Dorsolateral prefrontal cortex (tissue), 120 donors: ENCODE measurements at regions of chr4 and their contacts with region 1.

Region 1: GRCh38 chr4:27048429-27049238 is 188.0 kb downstream of the STIM2 start:
- DNase-seq: no peak
- H3K4me3 ChIP-seq: peak overlapping the region; percentile 1 to 74 (median 56)
- H3K27ac ChIP-seq: peak overlapping the region in 3 of 59 donors; percentile 1 to 36 (median 15)
- H3K27me3 ChIP-seq: peaks cover 0 to 12% (median 0%) of the 10 kb centered on the region in 45 donors
- CTCF ChIP-seq: peak; percentile 71 to 97 (median 86)

Region 2: GRCh38 chr4:26943391-26943790 is 105.2 kb before region 1 on chr4:
- intact Hi-C with region 1: no loop called
- DNase-seq: no peak
- H3K4me3 ChIP-seq: no peak overlapping the region
- H3K27ac ChIP-seq: peak overlapping the region in 13 of 59 donors; percentile 0 to 62 (median 18)
- H3K27me3 ChIP-seq: no peaks in the 10 kb centered on the region
- CTCF ChIP-seq: no peak

Region 3: DNA sequence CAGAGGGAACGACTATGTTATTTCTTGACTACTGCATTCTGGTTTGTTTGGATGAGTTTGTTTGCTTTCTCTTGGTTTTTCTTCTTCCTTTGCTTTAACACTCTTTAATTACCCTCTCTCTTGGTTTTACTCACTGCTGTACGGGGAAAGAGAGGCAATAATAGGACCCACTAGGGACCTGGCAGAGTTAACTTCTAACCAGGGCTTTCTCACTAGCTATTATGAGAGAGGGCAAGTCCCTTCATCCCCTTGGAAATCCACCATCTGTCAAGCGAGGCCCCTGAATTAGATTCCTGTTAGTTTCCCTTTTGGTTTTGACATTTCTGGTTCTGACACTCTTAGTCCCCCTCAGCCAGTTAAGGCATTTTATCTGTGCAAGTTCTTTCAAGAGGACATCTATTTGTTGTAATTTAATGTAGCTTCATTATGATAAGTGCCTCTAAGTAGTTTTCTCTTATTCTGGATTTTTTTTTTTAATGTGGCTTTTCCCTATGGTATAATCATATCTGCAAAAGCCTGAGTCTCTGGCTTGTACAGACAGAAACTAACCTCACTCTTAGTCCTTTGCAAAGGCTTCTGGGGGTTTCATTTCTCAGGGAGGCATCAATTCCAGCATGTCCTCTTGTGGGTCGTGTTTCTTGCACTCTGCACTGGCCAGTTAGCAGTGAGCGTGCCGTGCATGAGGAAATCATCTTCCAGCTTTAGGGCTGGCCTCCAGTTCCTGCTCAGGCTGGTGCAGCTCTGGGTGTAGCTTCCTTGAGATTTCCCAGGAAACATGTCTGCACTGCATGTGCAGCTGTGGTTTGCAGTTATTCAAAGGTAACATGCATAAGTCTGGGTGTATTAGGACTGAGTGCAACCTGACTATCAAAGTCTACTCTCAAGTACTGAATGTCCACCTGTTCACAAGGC is 33.3 kb after region 1 on chr4:
- intact Hi-C with region 1: loop called in 1 of 2 experiments (anchors 2 kb)
- DNase-seq: no peak
- H3K4me3 ChIP-seq: no peak overlapping the region
- H3K27ac ChIP-seq: no peak overlapping the region
- H3K27me3 ChIP-seq: peaks cover 0 to 11% (median 0%) of the 10 kb centered on the region in 45 donors
- CTCF ChIP-seq: no peak

Region 4: DNA sequence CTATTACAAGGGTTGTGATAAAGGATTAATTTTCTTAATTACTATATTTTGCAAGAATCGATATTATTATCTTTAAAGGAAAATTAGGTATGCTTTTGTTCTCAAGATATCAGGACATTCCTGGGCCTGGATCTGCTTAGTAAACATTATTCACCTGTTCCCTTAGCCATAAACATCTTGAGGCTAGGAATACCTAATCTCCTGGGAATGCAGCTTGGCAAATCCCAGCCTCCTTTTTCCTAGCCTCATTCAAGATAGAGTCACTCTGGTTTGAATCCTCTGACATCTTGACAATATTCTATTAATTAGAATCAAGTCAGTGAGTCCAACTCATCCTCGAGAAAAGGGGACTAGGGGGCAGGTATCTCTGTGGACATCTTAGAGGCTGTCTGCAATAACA is 139.2 kb after region 1 on chr4:
- intact Hi-C with region 1: no loop called
- DNase-seq: no peak
- H3K4me3 ChIP-seq: no peak overlapping the region
- H3K27ac ChIP-seq: no peak overlapping the region
- H3K27me3 ChIP-seq: peaks cover 0 to 13% (median 0%) of the 10 kb centered on the region in 45 donors
- CTCF ChIP-seq: no peak

Region 5: DNA sequence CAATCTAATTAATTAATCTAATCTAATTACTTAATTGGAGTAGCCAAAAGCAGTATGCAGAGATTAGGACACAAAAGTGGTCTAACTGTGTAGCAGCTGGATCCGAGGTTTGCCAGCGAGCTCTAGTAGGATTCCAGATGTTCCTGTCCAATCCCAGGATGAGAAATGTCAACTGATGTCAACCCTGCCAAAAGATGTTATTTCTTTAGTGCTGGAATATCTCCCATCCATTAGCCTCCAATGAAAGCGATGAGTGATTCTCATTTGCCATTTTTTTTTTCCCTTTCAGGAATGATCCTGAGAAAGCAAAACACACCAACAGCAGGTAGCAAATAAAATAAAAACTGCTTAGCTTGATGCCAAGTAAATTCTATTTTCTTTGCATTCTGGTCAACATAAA is 184.9 kb after region 1 on chr4:
- intact Hi-C with region 1: no loop called
- DNase-seq: no peak
- H3K4me3 ChIP-seq: no peak overlapping the region
- H3K27ac ChIP-seq: no peak overlapping the region
- H3K27me3 ChIP-seq: peaks cover 0 to 5% (median 0%) of the 10 kb centered on the region in 45 donors
- CTCF ChIP-seq: no peak

Region 6: DNA sequence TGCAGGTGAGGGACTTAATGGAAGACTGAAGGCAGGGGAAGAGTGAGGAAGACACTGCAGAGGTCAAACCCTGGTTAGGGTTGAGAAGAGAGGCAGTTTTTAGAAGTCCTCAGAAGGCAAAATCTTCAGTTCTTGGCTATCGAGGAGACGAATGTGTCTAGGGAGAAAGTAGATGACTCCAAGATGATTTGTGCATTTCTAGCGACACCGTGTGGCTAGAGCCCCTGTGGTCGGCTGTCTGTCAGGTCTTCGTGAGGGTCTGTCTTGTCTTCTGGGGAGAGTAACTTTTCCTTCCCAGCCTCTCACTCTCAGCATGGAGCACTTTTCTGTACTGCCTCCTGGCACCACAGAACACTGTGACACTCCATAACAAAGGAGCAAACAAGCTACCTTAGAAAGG is 270.1 kb after region 1 on chr4:
- intact Hi-C with region 1: loop called (anchors 2 to 10 kb)
- DNase-seq: peak in 3 of 10 donors; percentile 22 to 41 (median 41)
- H3K4me3 ChIP-seq: no peak overlapping the region
- H3K27ac ChIP-seq: no peak overlapping the region
- H3K27me3 ChIP-seq: peaks cover 0 to 13% (median 0%) of the 10 kb centered on the region in 45 donors
- CTCF ChIP-seq: peak in 44 of 56 donors; percentile 22 to 65 (median 38)